IMR-90 (cell line): ENCODE measurements at regions of chr4 and their contacts with region 1.

Region 1: GRCh38 chr4:151099229-151099975 is at the start of gene RPS3A:
- DNase-seq: peak; percentile 98
- ATAC-seq: peak; percentile 97
- H3K4me3 ChIP-seq: peak within 1 kb of the TSS; percentile 97
- H3K27ac ChIP-seq: peak within 1 kb of the TSS; percentile 82
- H3K4me1 ChIP-seq: no peaks in the 10 kb centered on the region
- H3K27me3 ChIP-seq: no peaks in the 10 kb centered on the region
- CTCF ChIP-seq: peak; percentile 94
- POLR2A ChIP-seq: peak; percentile 97
- RAD21 ChIP-seq: no peak
- total RNA-seq, gene RPS3A: 1,618 and 2,908 TPM in 2 replicates

Region 2: DNA sequence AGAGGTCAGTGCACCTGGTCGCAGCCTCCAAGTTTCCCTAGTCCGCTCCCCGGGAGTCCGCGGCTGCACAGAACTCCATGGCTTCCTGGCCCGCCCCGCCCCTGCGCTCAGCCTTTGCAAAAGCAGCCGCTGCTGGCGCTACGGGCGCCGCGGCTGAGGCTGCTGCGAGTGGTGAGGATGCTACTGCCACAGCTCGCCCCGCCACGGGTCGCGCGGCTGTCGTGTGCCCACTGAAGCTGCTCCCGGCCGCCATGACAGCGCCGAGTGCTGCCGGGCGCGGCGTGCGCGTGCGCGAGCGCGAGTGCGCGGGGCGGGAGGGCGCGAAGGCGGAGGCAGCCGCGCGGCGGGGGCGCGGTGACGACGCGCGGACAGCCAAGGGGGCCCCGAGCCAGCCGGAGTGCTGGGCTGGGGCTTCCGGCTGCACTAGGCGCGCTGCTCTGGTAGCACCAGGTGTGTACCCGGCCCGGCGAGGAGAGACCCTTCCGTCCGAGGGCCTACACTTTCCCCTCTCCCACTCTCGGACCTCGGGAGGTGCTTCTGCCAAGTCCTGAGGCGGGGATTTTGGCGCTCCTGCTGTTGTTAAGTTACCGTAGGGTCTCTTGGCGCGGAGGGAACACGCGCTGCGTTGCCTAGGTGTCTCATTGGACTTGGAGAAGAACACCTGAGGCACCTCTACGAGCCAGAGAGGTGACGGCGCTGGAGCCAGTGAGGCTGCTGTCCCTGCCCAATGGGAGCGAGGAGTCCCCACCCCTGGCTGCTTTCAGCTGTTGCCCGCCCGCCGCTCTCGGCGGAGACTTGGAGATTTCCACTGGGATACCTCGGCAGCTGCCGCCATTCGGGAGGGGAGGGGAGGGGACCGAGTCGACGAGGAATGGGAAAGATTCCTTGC is 83.7 kb before region 1 on chr4:
- CTCF ChIA-PET with region 1: no interaction called
- POLR2A ChIA-PET with region 1: no interaction called
- dilution Hi-C with region 1: no loop called
- in situ Hi-C with region 1: no loop called
- intact Hi-C with region 1: loop called (anchors 5 kb)
- DNase-seq: peak; percentile 54
- ATAC-seq: peak; percentile 92
- H3K4me3 ChIP-seq: peak overlapping the region; percentile 99
- H3K27ac ChIP-seq: peak overlapping the region; percentile 67
- H3K4me1 ChIP-seq: no peaks in the 10 kb centered on the region
- H3K27me3 ChIP-seq: no peaks in the 10 kb centered on the region
- CTCF ChIP-seq: no peak
- POLR2A ChIP-seq: no peak
- RAD21 ChIP-seq: no peak